Right ventricle myocardium inferior (tissue), 1 donor: ENCODE measurements at regions of chr1 and their contacts with region 1.

Region 1: GRCh38 chr1:6052543-6053205 is 7.0 kb downstream of the KCNAB2 start:
- DNase-seq: peak; percentile 53
- ATAC-seq: peak; percentile 41

Region 2: GRCh38 chr1:5809207-5809788 is 243.4 kb before region 1 on chr1:
- intact Hi-C with region 1: no loop called
- DNase-seq: no peak
- ATAC-seq: no peak

Region 3: DNA sequence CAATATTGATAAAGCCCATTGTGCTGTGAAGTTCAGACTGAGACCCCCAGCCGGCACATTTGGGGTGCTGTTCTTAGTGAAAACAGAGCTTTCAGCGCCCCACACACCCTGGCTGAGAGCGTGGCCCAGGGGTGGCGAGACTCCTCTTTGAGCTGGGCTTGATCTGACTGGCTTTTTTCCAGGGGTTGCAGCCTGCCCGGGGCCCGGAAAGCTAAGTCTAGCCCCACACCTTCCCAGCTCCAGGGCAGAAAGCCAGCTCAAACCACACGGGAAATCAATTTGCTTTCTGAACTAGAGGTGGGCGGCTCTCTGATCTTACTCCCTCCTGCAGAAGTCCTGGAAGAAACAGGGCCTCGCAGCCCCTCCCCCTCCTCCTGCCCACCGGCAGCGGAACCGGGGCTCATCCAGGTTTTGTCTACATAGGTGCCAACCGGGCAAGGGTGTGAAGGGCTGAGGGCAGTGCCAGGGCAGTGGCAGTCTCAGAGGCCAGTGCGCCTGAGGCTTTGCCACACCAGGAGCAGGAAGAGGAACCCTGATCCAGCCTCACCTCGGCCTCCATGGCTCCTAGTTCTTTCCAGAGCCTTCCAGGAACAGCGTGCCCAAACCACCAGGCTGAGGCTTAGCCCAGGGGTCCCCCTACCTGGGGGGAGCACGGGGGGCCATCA is 215.8 kb before region 1 on chr1:
- intact Hi-C with region 1: no loop called
- DNase-seq: peak; percentile 50
- ATAC-seq: no peak

Region 4: DNA sequence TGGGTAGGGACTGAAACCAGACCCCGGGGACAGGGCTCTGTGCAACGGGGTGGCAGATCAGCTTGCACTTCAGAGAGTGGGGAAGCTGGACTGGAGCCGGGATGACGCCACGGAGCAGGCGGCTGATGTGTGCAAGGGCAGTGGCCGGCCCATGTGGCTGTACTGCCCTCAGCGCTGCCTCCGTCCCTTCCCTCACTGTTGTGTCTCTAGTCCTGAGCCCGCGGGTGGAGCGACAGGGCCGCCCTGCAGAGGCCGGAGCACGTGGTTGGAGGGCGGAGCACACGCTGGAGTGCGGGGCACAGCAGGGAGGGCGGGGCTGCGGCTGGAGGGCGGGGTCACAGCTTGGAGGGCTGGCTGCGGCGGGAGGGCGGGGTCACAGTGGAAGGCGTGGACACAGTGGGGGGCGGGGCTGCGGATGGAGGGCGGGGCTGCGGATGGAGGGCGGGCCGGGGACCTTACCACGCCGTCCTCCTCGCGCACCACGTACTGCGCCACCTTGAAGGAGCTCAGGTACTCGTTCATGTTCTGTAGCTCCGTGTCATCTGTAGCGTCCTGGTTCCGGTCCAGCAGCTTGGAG is 75.0 kb after region 1 on chr1:
- intact Hi-C with region 1: no loop called
- DNase-seq: peak; percentile 90
- ATAC-seq: peak; percentile 75

Region 5: GRCh38 chr1:6171548-6172119 is 119.0 kb after region 1 on chr1:
- intact Hi-C with region 1: loop called (anchors 10 kb)
- DNase-seq: no peak
- ATAC-seq: peak; percentile 12

Region 6: GRCh38 chr1:6245086-6245868 is 192.6 kb after region 1 on chr1:
- intact Hi-C with region 1: loop called (anchors 1 kb)
- DNase-seq: peak; percentile 88
- ATAC-seq: peak; percentile 78